T-cell (primary cell): ENCODE measurements at regions of chr7 and their contacts with region 1.

Region 1: GRCh38 chr7:26187380-26188205 is 13.0 kb downstream of the HNRNPA2B1 start:
- DNase-seq: peak in 1 of 35 experiments; percentile 29
- ATAC-seq: peak in 2 of 4 experiments; percentile 9 to 25
- H3K4me3 ChIP-seq: no peak overlapping the region
- H3K4me3 Mint-ChIP-seq: peak overlapping the region in 1 of 3 donors; percentile 20
- H3K27ac ChIP-seq: peak overlapping the region; percentile 28
- H3K27ac Mint-ChIP-seq: peak overlapping the region; percentile 56 to 69
- H3K4me1 ChIP-seq: peaks cover 17 to 22% of the 10 kb centered on the region in 2 experiments
- H3K4me1 Mint-ChIP-seq: peaks cover 84 to 89% (median 88%) of the 10 kb centered on the region in 3 donors
- H3K27me3 ChIP-seq: no peaks in the 10 kb centered on the region
- H3K27me3 Mint-ChIP-seq: no peaks in the 10 kb centered on the region

Region 2: GRCh38 chr7:26151953-26152781 is 35.4 kb before region 1 on chr7 and contains the start of gene NFE2L3:
- CTCF ChIA-PET with region 1: interaction called, 3 to 6 read pairs
- POLR2A ChIA-PET with region 1: interaction called, 4 to 12 read pairs
- DNase-seq: peak; percentile 57 to 90 (median 71)
- ATAC-seq: peak; percentile 78 to 86 (median 86)
- H3K4me3 ChIP-seq: peak within 1 kb of the TSS; percentile 50 to 58
- H3K4me3 Mint-ChIP-seq: peak within 1 kb of the TSS; percentile 80 to 93 (median 87)
- H3K27ac ChIP-seq: peak within 1 kb of the TSS; percentile 43
- H3K27ac Mint-ChIP-seq: peak within 1 kb of the TSS; percentile 91 to 93
- H3K4me1 ChIP-seq: peaks cover 22 to 52% of the 10 kb centered on the region in 2 experiments
- H3K4me1 Mint-ChIP-seq: peaks cover 54 to 55% (median 54%) of the 10 kb centered on the region in 3 donors
- H3K27me3 ChIP-seq: no peaks in the 10 kb centered on the region
- H3K27me3 Mint-ChIP-seq: no peaks in the 10 kb centered on the region
- total RNA-seq, gene NFE2L3: 1.8 to 6.2 (median 5.1) TPM

Region 3: DNA sequence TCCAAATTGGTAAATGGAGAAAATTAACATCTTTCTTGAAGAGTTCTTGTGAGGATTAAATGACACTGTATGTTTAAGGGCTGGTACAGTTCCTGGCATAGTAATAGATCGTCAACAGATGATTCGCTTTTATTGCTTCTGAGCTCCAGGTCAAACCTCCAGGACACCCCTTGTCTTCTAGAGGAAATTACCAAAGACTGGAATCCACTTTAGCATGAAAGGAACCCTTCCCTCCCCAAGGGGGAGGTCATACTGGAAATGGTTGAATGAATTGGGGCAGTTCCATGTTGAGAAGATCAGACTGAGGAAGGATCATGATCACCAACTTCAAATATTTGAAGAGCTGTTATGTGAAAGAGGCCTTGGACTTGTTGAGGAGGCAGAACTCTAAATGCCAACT is 26.7 kb before region 1 on chr7:
- CTCF ChIA-PET with region 1: interaction called, 3 to 5 read pairs
- POLR2A ChIA-PET with region 1: interaction called, 6 to 24 read pairs
- DNase-seq: no peak
- ATAC-seq: no peak
- H3K4me3 ChIP-seq: no peak overlapping the region
- H3K4me3 Mint-ChIP-seq: no peak overlapping the region
- H3K27ac ChIP-seq: no peak overlapping the region
- H3K27ac Mint-ChIP-seq: no peak overlapping the region
- H3K4me1 ChIP-seq: peaks cover 3 to 24% of the 10 kb centered on the region in 2 experiments
- H3K4me1 Mint-ChIP-seq: peaks cover 41 to 55% (median 45%) of the 10 kb centered on the region in 3 donors
- H3K27me3 ChIP-seq: no peaks in the 10 kb centered on the region
- H3K27me3 Mint-ChIP-seq: no peaks in the 10 kb centered on the region

Region 4: DNA sequence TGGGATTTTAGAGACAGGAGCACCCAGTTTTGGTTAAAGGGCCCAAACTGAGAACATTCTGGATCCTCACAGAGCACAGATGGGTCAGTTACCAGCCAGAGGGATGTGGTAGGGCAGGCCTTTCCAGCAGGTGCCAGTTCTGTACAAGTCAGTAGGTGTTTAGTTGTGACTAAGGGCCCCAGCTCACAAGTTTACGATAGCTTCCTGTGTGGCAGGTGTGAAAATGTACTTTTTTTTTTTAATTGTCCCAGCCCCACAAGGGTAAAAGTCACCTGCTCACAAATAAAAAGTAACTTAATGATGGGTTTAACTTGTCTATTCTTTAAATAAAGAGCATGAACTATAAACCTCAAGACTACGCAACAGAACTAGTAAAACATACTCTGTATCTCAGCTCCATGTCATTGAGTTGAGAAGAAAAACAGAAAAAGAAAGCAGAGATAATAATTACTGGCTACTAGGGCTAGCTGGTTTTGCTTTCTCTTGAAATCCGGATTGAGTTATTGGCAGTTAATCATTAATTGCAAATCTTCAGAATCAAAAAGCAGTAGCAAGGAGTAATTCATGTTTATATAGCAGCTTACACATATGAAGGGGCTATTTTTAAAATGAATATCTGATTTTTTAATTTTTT is 20.2 kb before region 1 on chr7:
- CTCF ChIA-PET with region 1: interaction called, 3 read pairs
- POLR2A ChIA-PET with region 1: interaction called, 4 to 13 read pairs
- DNase-seq: peak in 16 of 35 experiments; percentile 16 to 70 (median 30)
- ATAC-seq: peak; percentile 45 to 86 (median 76)
- H3K4me3 ChIP-seq: no peak overlapping the region
- H3K4me3 Mint-ChIP-seq: no peak overlapping the region
- H3K27ac ChIP-seq: peak overlapping the region; percentile 77
- H3K27ac Mint-ChIP-seq: peak overlapping the region; percentile 62 to 79
- H3K4me1 ChIP-seq: peaks cover 5 to 14% of the 10 kb centered on the region in 2 experiments
- H3K4me1 Mint-ChIP-seq: peaks cover 13 to 29% (median 20%) of the 10 kb centered on the region in 3 donors
- H3K27me3 ChIP-seq: no peaks in the 10 kb centered on the region
- H3K27me3 Mint-ChIP-seq: no peaks in the 10 kb centered on the region